Activated naive CD4-positive, alpha-beta T cell treated with anti-CD3 and anti-CD28 coated beads for 36 hours (primary cell): ENCODE measurements at regions of chr2 and their contacts with region 1.

Region 1: DNA sequence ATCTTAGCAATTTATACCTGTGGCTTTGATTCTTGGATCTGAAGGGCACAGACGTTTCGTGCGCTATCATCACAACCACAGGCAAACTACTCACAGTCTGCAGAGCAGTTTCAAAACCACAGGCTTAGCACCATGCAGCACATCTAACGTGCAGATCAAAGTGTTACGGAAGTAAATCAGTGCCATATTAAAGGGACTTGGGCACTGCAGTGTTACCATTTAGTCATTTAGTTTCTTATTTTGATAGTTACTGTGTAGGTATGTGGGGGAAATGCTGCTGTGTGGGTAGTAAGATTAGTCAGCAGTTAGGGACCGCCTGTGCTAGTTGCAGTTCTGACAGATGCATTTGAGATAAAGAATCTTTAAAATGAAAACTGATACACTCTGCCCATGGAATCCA is 384.0 kb downstream of the NBAS start:
- DNase-seq: peak; percentile 85
- H3K4me3 Mint-ChIP-seq: no peak overlapping the region
- H3K27ac Mint-ChIP-seq: no peak overlapping the region
- H3K4me1 Mint-ChIP-seq: peaks cover 51% of the 10 kb centered on the region
- H3K27me3 Mint-ChIP-seq: peaks cover 19% of the 10 kb centered on the region

Region 2: GRCh38 chr2:15142069-15142873 is 34.8 kb before region 1 on chr2:
- CTCF ChIA-PET with region 1: no interaction called
- intact Hi-C with region 1: loop called (anchors 1 kb)
- DNase-seq: peak; percentile 90
- H3K4me3 Mint-ChIP-seq: peak overlapping the region; percentile 20
- H3K27ac Mint-ChIP-seq: peak overlapping the region; percentile 90
- H3K4me1 Mint-ChIP-seq: peaks cover 23% of the 10 kb centered on the region
- H3K27me3 Mint-ChIP-seq: peaks cover 5% of the 10 kb centered on the region

Region 3: DNA sequence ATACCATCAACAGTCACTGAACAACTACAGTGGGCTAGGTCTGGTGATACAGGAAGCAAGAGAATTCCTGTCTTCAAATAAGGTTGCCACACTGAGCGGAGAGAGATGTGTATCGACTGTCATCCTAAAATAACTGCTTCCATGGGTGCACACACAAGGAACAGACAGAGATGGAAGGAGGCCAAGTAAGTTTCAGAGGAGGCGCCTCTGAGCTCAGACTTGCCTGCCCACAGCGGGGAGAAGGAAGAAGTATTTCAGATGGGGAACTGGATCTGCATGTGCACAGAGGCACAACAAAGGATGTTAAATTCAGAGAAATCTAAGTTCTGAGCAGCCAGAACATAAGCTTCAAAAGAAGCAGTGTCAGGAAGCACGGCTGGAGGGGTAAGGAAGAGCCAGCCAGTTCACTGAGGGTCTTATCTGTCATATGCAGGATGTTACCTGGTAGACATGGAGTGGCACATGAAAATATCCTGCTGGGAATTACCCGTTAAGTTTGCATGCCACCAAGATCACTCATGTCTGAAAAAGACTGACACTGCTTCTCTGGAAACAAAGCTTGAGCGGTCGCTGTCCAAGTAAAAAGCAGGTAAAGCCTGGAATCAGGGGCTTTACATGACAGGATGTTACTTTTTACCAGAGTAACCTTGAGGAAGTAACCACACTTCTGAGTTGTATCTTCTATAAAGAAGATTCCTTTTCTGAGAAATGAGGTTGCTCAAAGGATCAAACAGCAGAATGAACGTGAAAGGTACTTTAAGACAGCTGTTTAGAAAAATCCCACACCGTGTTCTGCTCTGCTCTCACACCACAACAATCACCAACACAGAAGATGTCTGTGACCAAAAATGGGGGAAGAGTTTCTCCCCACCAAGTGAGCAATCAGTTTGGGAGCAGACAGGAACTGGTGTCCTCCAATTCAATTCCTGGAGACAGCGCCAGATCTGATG is 123.8 kb after region 1 on chr2:
- CTCF ChIA-PET with region 1: no interaction called
- intact Hi-C with region 1: loop called (anchors 1 kb)
- DNase-seq: peak; percentile 7
- H3K4me3 Mint-ChIP-seq: no peak overlapping the region
- H3K27ac Mint-ChIP-seq: peak overlapping the region; percentile 28
- H3K4me1 Mint-ChIP-seq: peaks cover 35% of the 10 kb centered on the region
- H3K27me3 Mint-ChIP-seq: no peaks in the 10 kb centered on the region

Region 4: DNA sequence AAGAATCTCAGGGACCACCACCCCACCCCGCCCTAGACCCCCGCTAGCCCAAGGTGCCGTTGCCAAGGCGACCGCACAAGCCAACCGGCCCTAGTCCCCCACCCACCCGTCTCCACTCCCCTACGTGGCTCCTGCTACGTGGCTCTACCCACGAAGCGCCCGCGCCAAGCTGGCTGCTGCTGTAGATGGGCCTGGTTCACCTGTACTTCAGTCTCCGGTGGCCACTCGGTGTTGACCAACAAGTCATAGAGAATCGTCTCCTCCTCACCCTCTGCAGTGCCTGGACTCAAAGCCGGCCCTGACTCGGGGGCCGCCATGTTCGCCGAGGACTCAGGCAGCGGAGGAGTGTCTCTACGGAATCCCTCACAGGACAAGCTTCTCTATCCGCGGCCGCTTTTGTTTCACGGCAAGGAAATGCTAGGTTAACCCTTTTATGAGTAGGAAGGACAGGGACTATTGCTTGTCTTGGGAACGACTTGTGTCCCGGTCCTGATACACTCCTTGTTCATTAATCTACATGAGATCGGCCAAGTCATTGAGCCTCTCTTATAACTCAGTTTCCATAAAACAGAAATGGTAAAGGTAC is 384.0 kb after region 1 on chr2 and contains the start of gene NBAS:
- CTCF ChIA-PET with region 1: no interaction called
- intact Hi-C with region 1: loop called (anchors 1 kb)
- DNase-seq: peak; percentile 94
- H3K4me3 Mint-ChIP-seq: peak within 1 kb of the TSS; percentile 98
- H3K27ac Mint-ChIP-seq: peak within 1 kb of the TSS; percentile 92
- H3K4me1 Mint-ChIP-seq: peaks cover 32% of the 10 kb centered on the region
- H3K27me3 Mint-ChIP-seq: no peaks in the 10 kb centered on the region
- total RNA-seq, gene NBAS: 45.5 to 46.4 TPM

Region 5: DNA sequence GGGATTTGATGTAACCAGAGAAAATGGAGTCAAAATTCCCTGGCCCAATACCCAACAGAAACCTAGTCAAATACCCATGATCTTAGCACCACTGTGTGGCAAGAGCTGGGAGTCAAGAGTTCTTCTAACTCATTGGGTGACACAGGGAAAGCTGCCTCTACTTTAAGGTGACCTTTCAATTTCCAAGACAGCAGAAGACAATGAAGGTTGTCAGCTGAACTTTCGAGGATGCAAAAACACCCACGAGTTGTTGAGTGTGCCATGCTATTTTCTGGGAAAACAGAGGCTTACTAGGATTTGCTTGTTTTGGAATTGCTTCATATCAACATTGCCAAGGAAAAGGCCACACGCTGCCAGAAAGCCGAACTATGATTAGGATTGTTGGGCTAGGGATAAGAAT is 1550.2 kb after region 1 on chr2:
- CTCF ChIA-PET with region 1: no interaction called
- intact Hi-C with region 1: loop called (anchors 5 kb)
- DNase-seq: no peak
- H3K4me3 Mint-ChIP-seq: no peak overlapping the region
- H3K27ac Mint-ChIP-seq: no peak overlapping the region
- H3K4me1 Mint-ChIP-seq: peaks cover 27% of the 10 kb centered on the region
- H3K27me3 Mint-ChIP-seq: peaks cover 23% of the 10 kb centered on the region